SK-N-SH (cell line): ENCODE measurements at regions of chr11 and their contacts with region 1.

Region 1: GRCh38 chr11:72430741-72431570 is 3.4 kb downstream of the CLPB start:
- DNase-seq: peak; percentile 74
- H3K4me3 ChIP-seq: peak overlapping the region in 1 of 2 experiments; percentile 36; a peak in 1 of 4 replicates
- H3K27ac ChIP-seq: peak overlapping the region in 1 of 2 experiments; percentile 67; a peak in 2 of 4 replicates
- H3K4me1 ChIP-seq: peaks cover 9 to 44% of the 10 kb centered on the region in 2 experiments; a peak in 2 of 4 replicates
- H3K27me3 ChIP-seq: no peaks in the 10 kb centered on the region
- CTCF ChIP-seq: peak; percentile 91
- EP300 ChIP-seq: no peak
- RAD21 ChIP-seq: peak; percentile 98

Region 2: GRCh38 chr11:72040726-72041441 is 390.1 kb before region 1 on chr11:
- CTCF ChIA-PET with region 1: interaction called, 11 read pairs
- POLR2A ChIA-PET with region 1: no interaction called
- DNase-seq: peak; percentile 75
- H3K4me3 ChIP-seq: peak overlapping the region; percentile 64 to 67
- H3K27ac ChIP-seq: peak overlapping the region; percentile 97 to 99
- H3K4me1 ChIP-seq: peaks cover 18 to 45% of the 10 kb centered on the region in 2 experiments
- H3K27me3 ChIP-seq: no peaks in the 10 kb centered on the region
- CTCF ChIP-seq: no peak
- EP300 ChIP-seq: no peak
- RAD21 ChIP-seq: no peak

Region 3: DNA sequence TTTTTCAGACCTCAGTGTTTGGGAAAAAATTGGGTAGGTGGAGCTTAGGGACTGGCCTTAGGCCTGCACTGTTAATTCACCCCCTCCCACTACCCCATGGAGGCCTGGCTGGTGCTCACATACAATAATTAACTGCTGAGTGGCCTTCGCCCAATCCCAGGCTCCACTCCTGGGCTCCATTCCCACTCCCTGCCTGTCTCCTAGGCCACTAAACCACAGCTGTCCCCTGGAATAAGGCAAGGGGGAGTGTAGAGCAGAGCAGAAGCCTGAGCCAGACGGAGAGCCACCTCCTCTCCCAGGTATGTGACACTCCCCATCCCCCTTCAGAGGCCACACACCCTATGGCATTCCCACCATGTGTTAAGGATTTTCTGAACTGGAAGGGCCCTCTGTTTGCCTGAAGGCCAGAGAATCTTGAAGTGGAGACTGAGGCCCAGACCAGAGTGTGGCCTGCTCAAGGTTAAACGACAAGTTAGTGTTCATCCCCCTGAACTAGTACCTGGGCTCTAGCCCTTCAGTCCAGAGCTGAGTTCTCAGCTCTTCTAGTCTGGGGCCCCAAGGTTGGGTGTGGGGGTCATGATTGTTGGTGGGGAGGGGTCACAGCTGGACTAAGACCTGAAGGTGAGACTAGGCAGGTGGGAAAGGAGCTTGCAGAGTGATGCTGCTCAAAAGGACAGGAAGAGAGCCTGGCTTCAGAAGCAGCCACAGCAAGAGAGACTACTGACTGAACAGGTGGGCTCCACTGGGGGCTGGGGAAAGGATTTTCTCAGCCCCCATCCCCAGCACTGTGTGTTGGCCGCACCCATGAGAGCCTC is 241.3 kb before region 1 on chr11:
- CTCF ChIA-PET with region 1: interaction called, 17 read pairs
- POLR2A ChIA-PET with region 1: no interaction called
- DNase-seq: peak; percentile 27
- H3K4me3 ChIP-seq: no peak overlapping the region
- H3K27ac ChIP-seq: peak overlapping the region in 1 of 2 experiments; percentile 3; a peak in 1 of 4 replicates
- H3K4me1 ChIP-seq: peaks cover 0 to 12% of the 10 kb centered on the region in 2 experiments; a peak in 1 of 4 replicates
- H3K27me3 ChIP-seq: no peaks in the 10 kb centered on the region
- CTCF ChIP-seq: no peak
- EP300 ChIP-seq: no peak
- RAD21 ChIP-seq: no peak

Region 4: DNA sequence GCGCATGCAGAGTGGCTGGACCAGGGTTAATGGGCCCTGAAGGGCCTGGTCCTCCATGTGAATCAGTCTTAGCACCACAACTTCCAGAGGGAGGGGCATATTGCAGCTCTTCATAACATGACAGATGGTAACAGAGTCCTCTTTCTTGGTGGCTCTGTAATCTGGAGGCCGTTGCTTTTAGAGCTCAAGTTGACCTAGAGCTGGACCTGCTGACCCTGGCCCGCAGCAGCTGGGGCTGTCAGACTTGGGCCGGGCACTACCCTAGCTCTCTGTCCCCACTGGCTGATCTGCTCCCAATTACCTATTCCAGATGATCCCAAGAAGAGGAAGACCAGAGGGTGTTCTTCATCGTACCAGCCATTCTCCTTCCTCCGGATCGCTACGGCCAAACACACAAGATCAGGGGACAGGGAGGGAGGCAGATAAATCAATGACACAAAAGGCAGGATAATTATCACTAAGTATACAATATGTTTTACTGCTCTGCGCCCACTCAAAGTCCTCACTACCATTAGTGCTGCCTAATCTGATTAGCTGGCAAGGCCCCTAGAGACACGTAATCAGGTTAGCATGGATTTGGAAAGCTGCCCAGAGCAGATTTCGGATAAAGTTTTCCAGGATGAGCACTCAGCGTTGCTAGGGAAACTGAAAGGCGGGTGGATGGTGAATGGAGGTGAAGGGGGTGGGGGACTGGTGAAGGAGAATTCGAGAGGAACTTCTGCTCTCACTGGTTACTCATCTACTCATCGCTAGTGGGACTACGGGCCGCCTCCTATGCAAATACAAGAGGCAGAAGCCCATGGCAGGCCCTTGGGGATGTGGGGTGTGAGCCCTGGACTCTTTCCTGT is 122.5 kb before region 1 on chr11:
- CTCF ChIA-PET with region 1: interaction called, 22 read pairs
- POLR2A ChIA-PET with region 1: interaction called, 11 read pairs
- DNase-seq: peak; percentile 81
- H3K4me3 ChIP-seq: no peak overlapping the region; a peak in 1 of 4 replicates
- H3K27ac ChIP-seq: peak overlapping the region; percentile 96 to 100
- H3K4me1 ChIP-seq: peaks cover 31 to 76% of the 10 kb centered on the region in 2 experiments
- H3K27me3 ChIP-seq: no peaks in the 10 kb centered on the region
- CTCF ChIP-seq: no peak; the same call in 1 of the 2 replicates
- EP300 ChIP-seq: peak; percentile 93 to 99
- RAD21 ChIP-seq: peak; percentile 43

Region 5: DNA sequence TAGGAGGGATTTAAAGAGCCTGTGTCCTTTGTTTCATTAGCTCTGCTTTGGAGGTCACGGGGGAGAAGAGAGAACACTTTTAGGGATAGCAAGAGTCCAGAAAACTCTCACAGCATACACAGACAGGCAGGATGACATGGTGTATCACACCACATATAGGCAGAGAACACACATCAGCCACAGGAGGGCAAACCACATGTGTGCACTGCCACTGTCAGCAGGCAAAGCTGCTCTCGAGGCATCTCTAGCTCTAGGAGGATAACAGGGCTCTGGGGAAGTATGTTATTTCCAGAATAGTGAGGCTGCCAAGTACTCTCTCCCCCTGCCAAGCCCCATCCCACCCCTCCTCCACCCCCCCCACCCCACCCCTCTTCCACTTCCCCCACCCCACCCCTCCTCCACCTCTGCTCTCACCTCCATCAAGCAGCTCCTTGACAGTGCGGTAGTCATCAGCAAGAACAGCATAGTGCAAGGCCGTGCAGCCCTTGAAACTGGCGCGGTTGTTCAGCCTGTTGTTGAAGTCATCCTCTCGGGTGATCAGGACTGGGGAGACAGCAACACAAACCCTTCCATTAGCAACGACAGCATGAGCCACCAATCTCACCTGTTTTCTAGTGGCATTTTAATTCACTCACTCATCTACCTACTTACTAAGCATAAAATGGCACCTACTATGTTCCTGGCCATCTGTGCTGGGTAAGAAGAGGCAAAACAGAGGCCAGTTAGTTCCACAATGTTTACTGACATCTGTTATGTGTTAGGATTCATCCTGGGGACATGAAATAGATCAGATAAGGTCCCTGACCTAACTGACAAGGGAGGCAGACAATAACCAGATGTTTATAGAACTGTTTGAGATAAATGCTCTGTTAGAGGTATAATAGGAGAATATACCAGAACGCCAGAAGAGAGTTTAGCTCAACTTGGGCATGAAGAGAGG is 72.2 kb before region 1 on chr11:
- CTCF ChIA-PET with region 1: interaction called, 321 read pairs
- POLR2A ChIA-PET with region 1: interaction called, 12 read pairs
- DNase-seq: peak; percentile 74
- H3K4me3 ChIP-seq: peak overlapping the region; percentile 38 to 44; a peak in 3 of 4 replicates
- H3K27ac ChIP-seq: peak overlapping the region; percentile 76 to 100
- H3K4me1 ChIP-seq: peaks cover 21 to 71% of the 10 kb centered on the region in 2 experiments; a peak in 3 of 4 replicates
- H3K27me3 ChIP-seq: no peaks in the 10 kb centered on the region
- CTCF ChIP-seq: no peak
- EP300 ChIP-seq: peak; percentile 98 to 100
- RAD21 ChIP-seq: peak; percentile 59

Region 6: GRCh38 chr11:72454791-72455190 is 23.8 kb after region 1 on chr11:
- CTCF ChIA-PET with region 1: interaction called, 21 read pairs
- POLR2A ChIA-PET with region 1: no interaction called
- DNase-seq: no peak
- H3K4me3 ChIP-seq: no peak overlapping the region
- H3K27ac ChIP-seq: no peak overlapping the region
- H3K4me1 ChIP-seq: no peaks in the 10 kb centered on the region
- H3K27me3 ChIP-seq: peaks cover 6% of the 10 kb centered on the region; the same call in 1 of the 2 replicates
- CTCF ChIP-seq: peak; percentile 19; the same call in 1 of the 2 replicates
- EP300 ChIP-seq: no peak
- RAD21 ChIP-seq: no peak

Region 7: DNA sequence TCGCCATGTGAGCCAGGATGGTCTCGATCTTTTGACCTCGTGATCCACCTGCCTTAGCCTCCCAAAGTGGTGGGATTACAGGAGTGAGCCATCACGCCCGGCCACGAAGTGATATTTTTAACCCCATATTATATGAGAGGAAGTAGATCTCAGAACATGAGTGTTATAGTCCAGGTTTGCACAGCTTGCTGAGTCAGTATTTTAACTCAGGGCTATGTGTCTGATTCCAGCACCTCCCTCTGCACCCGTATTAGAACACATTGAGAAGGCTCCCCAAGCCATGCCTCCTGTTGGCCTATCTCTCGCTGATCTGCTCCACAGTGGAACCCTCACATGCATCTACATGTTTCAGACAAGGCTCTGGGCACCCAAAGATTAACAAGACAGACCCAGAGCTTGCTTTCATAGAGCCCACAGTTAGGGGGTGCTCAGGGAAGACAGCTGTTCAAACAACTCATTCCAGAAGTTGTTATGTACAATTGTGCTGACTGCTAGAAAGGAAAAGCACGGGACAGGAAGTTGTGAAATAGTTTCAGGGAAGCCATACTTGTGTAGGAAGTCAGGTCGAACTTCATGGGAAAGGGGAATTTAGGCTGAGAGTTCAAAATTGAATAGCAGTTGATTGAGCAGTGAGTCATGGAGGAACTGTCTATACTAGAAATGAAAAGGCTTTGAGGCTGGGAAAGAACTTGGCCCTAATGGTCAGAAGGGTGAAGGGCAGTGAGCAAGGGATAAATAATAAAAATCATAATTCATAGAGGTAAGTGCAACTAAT is 52.6 kb after region 1 on chr11:
- CTCF ChIA-PET with region 1: no interaction called
- POLR2A ChIA-PET with region 1: no interaction called
- DNase-seq: no peak
- H3K4me3 ChIP-seq: no peak overlapping the region
- H3K27ac ChIP-seq: no peak overlapping the region
- H3K4me1 ChIP-seq: no peaks in the 10 kb centered on the region; a peak in 1 of 4 replicates
- H3K27me3 ChIP-seq: no peaks in the 10 kb centered on the region; the same call in 1 of the 2 replicates
- CTCF ChIP-seq: no peak
- EP300 ChIP-seq: no peak
- RAD21 ChIP-seq: no peak

Region 8: GRCh38 chr11:72613977-72614376 is 183.0 kb after region 1 on chr11:
- CTCF ChIA-PET with region 1: no interaction called
- POLR2A ChIA-PET with region 1: no interaction called
- DNase-seq: no peak
- H3K4me3 ChIP-seq: no peak overlapping the region
- H3K27ac ChIP-seq: no peak overlapping the region
- H3K4me1 ChIP-seq: peaks cover 0 to 30% of the 10 kb centered on the region in 2 experiments; a peak in 1 of 4 replicates
- H3K27me3 ChIP-seq: peaks cover 6% of the 10 kb centered on the region; the same call in 1 of the 2 replicates
- CTCF ChIP-seq: no peak
- EP300 ChIP-seq: no peak
- RAD21 ChIP-seq: no peak